Activated T-helper 1 cell treated with anti-CD3 and anti-CD28 coated beads, Interleukin-12 subunit alpha, Interleukin-12 subunit beta, Interleukin-2, Interleukin-4 antibody, amounts not matched to agents 30 ng/mL and 10 ng/mL and 1 ng/mL, durations not matched to agents 14 hours and 24 hours and 36 hours (primary cell): ENCODE measurements at regions of chr3 and their contacts with region 1.

Region 1: GRCh38 chr3:169772897-169773828 is at the start of gene MYNN:
- DNase-seq: peak; percentile 91
- H3K4me3 Mint-ChIP-seq: peak within 1 kb of the TSS; percentile 97
- H3K27ac Mint-ChIP-seq: peak within 1 kb of the TSS; percentile 99
- H3K4me1 Mint-ChIP-seq: peaks cover 56% of the 10 kb centered on the region
- H3K27me3 Mint-ChIP-seq: peaks cover 5% of the 10 kb centered on the region
- total RNA-seq, gene MYNN: 14.5 and 16.8 TPM in 2 replicates

Region 2: GRCh38 chr3:169400874-169401273 is 372.3 kb before region 1 on chr3:
- intact Hi-C with region 1: no loop called
- DNase-seq: no peak
- H3K4me3 Mint-ChIP-seq: no peak overlapping the region
- H3K27ac Mint-ChIP-seq: no peak overlapping the region
- H3K4me1 Mint-ChIP-seq: no peaks in the 10 kb centered on the region
- H3K27me3 Mint-ChIP-seq: no peaks in the 10 kb centered on the region

Region 3: DNA sequence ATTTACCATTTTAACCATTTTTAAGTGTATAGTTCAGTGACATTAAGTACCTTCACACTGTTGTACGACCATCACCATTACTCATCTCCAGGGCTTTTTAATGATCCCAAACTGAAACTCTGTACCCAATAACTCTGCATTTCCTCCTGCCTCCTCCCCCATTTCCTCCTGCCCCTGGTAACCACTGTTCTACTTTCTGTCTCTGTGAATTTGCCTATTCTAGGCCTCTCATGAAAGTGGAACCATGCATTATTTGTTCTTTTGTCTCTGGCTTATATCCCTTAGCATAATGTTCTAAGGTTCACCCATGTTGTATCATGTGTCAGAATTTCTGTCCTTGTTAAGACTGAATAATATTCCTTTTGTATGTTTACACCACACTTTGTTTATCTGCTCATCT is 263.8 kb before region 1 on chr3:
- intact Hi-C with region 1: no loop called
- DNase-seq: no peak
- H3K4me3 Mint-ChIP-seq: no peak overlapping the region
- H3K27ac Mint-ChIP-seq: no peak overlapping the region
- H3K4me1 Mint-ChIP-seq: peaks cover 16% of the 10 kb centered on the region
- H3K27me3 Mint-ChIP-seq: peaks cover 3% of the 10 kb centered on the region

Region 4: DNA sequence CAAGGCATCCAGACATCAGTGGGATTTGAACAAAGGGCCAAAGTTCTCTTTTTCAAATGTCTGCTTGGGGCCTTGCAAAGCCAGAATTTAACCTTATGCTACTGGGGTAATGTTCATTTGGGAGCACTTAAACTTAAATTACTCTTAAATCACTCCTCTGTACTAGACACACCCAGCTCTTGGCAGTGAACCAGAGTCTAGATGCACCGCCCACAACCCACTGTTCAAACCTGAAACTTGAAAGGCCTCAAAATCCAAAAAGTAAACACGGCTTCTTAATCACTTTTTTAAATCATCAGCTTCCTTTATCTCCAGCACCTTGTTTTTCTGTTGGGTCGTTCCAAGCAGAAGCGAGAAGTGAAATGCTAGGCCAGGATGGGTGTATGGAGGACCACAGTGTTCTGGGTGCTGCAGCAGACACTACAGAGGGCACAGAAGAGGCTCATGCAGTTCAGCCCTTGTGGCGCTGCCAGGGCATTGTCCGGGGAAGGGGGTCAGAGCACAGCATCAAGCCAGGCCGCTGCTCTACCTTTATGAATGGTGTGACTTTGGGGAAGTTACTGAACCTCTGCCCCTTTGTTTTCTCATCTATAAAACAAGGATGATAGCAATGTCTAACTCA is 138.4 kb before region 1 on chr3:
- intact Hi-C with region 1: no loop called
- DNase-seq: no peak
- H3K4me3 Mint-ChIP-seq: no peak overlapping the region
- H3K27ac Mint-ChIP-seq: no peak overlapping the region
- H3K4me1 Mint-ChIP-seq: no peaks in the 10 kb centered on the region
- H3K27me3 Mint-ChIP-seq: peaks cover 6% of the 10 kb centered on the region

Region 5: GRCh38 chr3:169759256-169759655 is 13.9 kb before region 1 on chr3:
- intact Hi-C with region 1: loop called (anchors 2 kb)
- DNase-seq: no peak
- H3K4me3 Mint-ChIP-seq: peak overlapping the region; percentile 2
- H3K27ac Mint-ChIP-seq: peak overlapping the region; percentile 38
- H3K4me1 Mint-ChIP-seq: peaks cover 23% of the 10 kb centered on the region
- H3K27me3 Mint-ChIP-seq: peaks cover 11% of the 10 kb centered on the region

Region 6: GRCh38 chr3:169914321-169914720 is 141.2 kb after region 1 on chr3:
- intact Hi-C with region 1: no loop called
- DNase-seq: no peak
- H3K4me3 Mint-ChIP-seq: no peak overlapping the region
- H3K27ac Mint-ChIP-seq: no peak overlapping the region
- H3K4me1 Mint-ChIP-seq: no peaks in the 10 kb centered on the region
- H3K27me3 Mint-ChIP-seq: no peaks in the 10 kb centered on the region

Region 7: GRCh38 chr3:170908235-170909116 is 1135.3 kb after region 1 on chr3 and contains the start of gene EIF5A2:
- intact Hi-C with region 1: loop called (anchors 5 kb)
- DNase-seq: peak; percentile 88
- H3K4me3 Mint-ChIP-seq: peak within 1 kb of the TSS; percentile 96
- H3K27ac Mint-ChIP-seq: peak within 1 kb of the TSS; percentile 85
- H3K4me1 Mint-ChIP-seq: peaks cover 24% of the 10 kb centered on the region
- H3K27me3 Mint-ChIP-seq: peaks cover 12% of the 10 kb centered on the region
- total RNA-seq, gene EIF5A2: 8.1 and 10.5 TPM in 2 replicates